ENCODE measurements at regions of chr21 and their contacts with region 1.

Region 1: GRCh38 chr21:34582506-34583150 is 32.3 kb downstream of the RCAN1 start:
- DNase-seq: no peak
- H3K4me3 ChIP-seq: no peak overlapping the region
- CTCF ChIP-seq: peak; percentile 66

Region 2: DNA sequence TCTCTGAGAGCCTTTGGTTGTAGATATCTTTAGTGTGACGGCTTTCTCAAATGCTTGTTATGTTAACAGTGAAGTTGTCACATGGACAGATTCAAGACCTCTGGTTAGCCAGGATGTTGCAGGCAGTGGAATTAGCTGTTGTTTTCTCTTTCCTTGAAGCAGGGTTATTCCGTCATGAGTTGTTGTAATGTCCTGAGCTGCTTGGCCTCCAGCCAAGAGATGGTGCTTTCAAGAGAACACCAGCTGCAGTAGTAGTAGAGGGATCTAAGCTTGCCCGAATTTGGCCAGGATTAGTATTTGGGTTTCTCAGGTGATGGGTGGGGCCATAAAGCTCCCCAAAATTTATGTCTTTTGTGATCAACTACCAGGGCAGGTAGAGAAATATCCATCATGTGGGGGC is 84.0 kb before region 1 on chr21:
- CTCF ChIA-PET with region 1: interaction called, 351 read pairs
- POLR2A ChIA-PET with region 1: no interaction called
- DNase-seq: no peak
- H3K4me3 ChIP-seq: no peak overlapping the region
- CTCF ChIP-seq: no peak

Region 3: GRCh38 chr21:34526618-34527290 is 55.9 kb before region 1 on chr21:
- CTCF ChIA-PET with region 1: interaction called, 351 read pairs
- POLR2A ChIA-PET with region 1: interaction called, 18 read pairs
- DNase-seq: peak; percentile 100
- H3K4me3 ChIP-seq: peak overlapping the region; percentile 67
- CTCF ChIP-seq: no peak

Region 4: GRCh38 chr21:34553151-34553952 is 29.3 kb before region 1 on chr21:
- CTCF ChIA-PET with region 1: interaction called, 13 read pairs
- POLR2A ChIA-PET with region 1: no interaction called
- DNase-seq: no peak
- H3K4me3 ChIP-seq: peak overlapping the region; percentile 45
- CTCF ChIP-seq: no peak

Region 5: DNA sequence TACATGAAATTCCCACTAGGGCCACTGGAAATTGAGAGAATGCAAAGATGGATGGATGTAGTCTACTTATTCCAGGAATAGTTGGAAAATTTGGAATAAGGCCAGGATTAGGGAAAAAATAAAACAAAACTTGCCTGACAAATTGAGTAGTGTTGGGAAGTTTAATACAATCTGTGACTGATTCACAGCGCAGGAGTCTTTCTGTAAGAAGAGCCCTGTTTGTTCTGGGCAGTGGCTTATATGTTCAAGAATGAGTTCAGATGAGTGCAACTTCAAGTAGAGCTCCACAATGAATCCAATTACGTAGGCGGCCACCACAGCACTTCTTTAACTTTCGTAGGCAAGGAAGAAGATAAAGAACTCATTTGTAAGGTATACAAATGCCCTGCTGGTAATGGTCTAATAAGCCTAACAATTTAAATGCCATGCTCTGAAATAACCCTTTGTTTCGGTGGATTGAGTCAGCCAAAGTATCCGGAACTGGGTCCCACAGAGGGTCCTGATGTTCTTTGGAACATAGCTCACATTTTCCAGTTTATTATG is 23.5 kb before region 1 on chr21:
- CTCF ChIA-PET with region 1: interaction called, 13 read pairs
- POLR2A ChIA-PET with region 1: no interaction called
- DNase-seq: no peak
- H3K4me3 ChIP-seq: no peak overlapping the region
- CTCF ChIP-seq: no peak

Region 6: DNA sequence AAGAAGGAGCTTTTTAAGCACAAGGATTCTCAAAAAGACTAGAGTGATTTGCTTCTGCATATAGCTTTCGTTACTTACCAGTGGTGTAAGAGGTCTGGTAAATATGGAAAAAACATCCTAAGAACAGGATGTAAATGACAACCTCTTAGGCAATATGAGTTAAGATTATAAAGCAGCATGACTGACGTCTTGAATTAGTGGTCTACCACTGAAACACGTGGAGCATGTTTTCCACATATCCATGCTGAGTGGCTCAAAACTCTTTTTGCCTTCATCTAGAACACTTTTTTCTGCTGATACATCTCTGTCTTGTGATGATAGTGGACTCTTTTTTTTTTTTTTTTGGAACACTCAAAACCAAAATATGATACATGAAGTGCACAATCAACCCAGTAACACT is 12.3 kb before region 1 on chr21:
- CTCF ChIA-PET with region 1: interaction called, 23 read pairs
- POLR2A ChIA-PET with region 1: interaction called, 4 read pairs
- DNase-seq: no peak
- H3K4me3 ChIP-seq: no peak overlapping the region
- CTCF ChIP-seq: no peak